H1 (cell line): ENCODE measurements at regions of chr19 and their contacts with region 1.

Region 1: GRCh38 chr19:28324275-28325060 is 888.5 kb downstream of the UQCRFS1 start:
- DNase-seq: no peak
- H3K4me3 ChIP-seq: no peak overlapping the region
- H3K27ac ChIP-seq: no peak overlapping the region
- H3K4me1 ChIP-seq: peaks cover 0 to 6% (median 5%) of the 10 kb centered on the region in 4 experiments; a peak in 3 of 7 replicates
- H3K27me3 ChIP-seq: no peaks in the 10 kb centered on the region
- CTCF ChIP-seq: peak; percentile 39 to 67 (median 63)
- EP300 ChIP-seq: no peak
- POLR2A ChIP-seq: no peak
- RAD21 ChIP-seq: peak; percentile 64 to 69

Region 2: GRCh38 chr19:27966390-27966816 is 358.1 kb before region 1 on chr19:
- CTCF ChIA-PET with region 1: interaction called, 17 read pairs
- POLR2A ChIA-PET with region 1: no interaction called
- DNase-seq: no peak
- H3K4me3 ChIP-seq: no peak overlapping the region
- H3K27ac ChIP-seq: no peak overlapping the region
- H3K4me1 ChIP-seq: 0 out of 7 replicates have a peak, but pooled peaks cover 0 to 5% (median 0%) of the 10 kb centered on the region in 4 experiments
- H3K27me3 ChIP-seq: no peaks in the 10 kb centered on the region
- CTCF ChIP-seq: peak in 2 of 3 experiments; percentile 29 to 58; a peak in 2 of 4 replicates
- EP300 ChIP-seq: no peak
- POLR2A ChIP-seq: no peak
- RAD21 ChIP-seq: peak; percentile 56 to 59

Region 3: DNA sequence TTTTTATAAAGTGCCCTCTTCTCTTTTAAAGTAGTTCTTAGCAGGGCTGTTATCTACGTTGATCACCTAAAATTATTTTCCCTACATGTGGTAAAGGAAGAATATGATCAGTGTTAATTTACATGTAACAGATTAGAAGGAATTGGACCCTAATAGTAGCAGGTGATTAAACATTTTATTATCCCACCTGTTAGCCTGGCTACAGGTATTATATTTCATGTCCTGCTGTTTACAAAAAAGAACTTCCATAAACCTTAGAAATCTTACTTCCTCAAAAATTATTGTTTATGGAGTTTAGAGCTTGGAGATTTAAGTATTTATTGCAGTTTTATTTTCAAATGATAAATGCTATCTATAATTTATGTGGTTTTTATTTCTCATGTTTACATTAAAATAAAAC is 338.2 kb before region 1 on chr19:
- CTCF ChIA-PET with region 1: interaction called, 13 read pairs
- POLR2A ChIA-PET with region 1: no interaction called
- DNase-seq: no peak
- H3K4me3 ChIP-seq: no peak overlapping the region
- H3K27ac ChIP-seq: no peak overlapping the region
- H3K4me1 ChIP-seq: no peaks in the 10 kb centered on the region
- H3K27me3 ChIP-seq: no peaks in the 10 kb centered on the region
- CTCF ChIP-seq: no peak
- EP300 ChIP-seq: no peak
- POLR2A ChIP-seq: no peak
- RAD21 ChIP-seq: no peak

Region 4: DNA sequence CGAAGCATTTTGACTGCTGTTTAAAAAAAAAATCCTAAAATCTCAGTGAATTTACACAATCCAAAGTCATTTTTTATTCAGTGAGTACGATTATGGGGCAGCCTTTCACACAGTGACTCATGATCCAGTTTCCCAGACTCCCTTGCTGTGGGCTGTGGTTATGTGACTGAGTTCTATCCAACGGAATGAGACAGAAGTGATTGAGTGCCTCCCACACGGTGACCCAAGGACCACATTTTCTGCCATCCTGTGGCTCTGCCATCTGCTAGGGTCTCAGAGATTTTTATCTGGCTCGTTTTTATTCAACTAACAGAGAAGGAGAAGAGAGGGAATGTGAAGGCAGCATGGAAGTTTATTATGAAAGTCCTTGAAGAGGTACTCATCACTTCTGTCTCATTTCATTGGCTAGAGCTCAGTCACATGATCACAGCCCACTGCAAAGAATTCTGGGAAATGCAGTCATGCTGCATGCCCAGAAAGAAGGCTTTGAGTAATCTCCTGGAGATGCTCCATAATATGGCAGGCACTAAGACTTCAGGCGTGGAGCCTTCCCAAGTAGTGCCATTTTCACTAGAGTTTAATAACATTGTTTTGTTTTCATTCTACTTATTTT is 110.9 kb before region 1 on chr19:
- CTCF ChIA-PET with region 1: interaction called, 79 read pairs
- POLR2A ChIA-PET with region 1: no interaction called
- DNase-seq: no peak
- H3K4me3 ChIP-seq: no peak overlapping the region
- H3K27ac ChIP-seq: no peak overlapping the region
- H3K4me1 ChIP-seq: peaks cover 0 to 4% (median 2%) of the 10 kb centered on the region in 4 experiments; a peak in 4 of 7 replicates
- H3K27me3 ChIP-seq: no peaks in the 10 kb centered on the region
- CTCF ChIP-seq: no peak
- EP300 ChIP-seq: no peak
- POLR2A ChIP-seq: no peak
- RAD21 ChIP-seq: no peak

Region 5: GRCh38 chr19:28313633-28314032 is 10.8 kb before region 1 on chr19:
- CTCF ChIA-PET with region 1: interaction called, 10 read pairs
- POLR2A ChIA-PET with region 1: interaction called, 3 read pairs
- DNase-seq: no peak
- H3K4me3 ChIP-seq: no peak overlapping the region
- H3K27ac ChIP-seq: no peak overlapping the region
- H3K4me1 ChIP-seq: peaks cover 0 to 10% (median 5%) of the 10 kb centered on the region in 4 experiments; a peak in 5 of 7 replicates
- H3K27me3 ChIP-seq: no peaks in the 10 kb centered on the region
- CTCF ChIP-seq: no peak
- EP300 ChIP-seq: no peak
- POLR2A ChIP-seq: no peak
- RAD21 ChIP-seq: no peak